Mammary epithelial cell (primary cell): ENCODE measurements at regions of chr5 and their contacts with region 1.

Region 1: GRCh38 chr5:73792687-73793320 is 166.8 kb downstream of the ARHGEF28 start:
- DNase-seq: peak; percentile 61
- H3K4me3 ChIP-seq: no peak overlapping the region
- H3K27ac ChIP-seq: no peak overlapping the region
- H3K4me1 ChIP-seq: peaks cover 35% of the 10 kb centered on the region
- H3K27me3 ChIP-seq: no peaks in the 10 kb centered on the region
- CTCF ChIP-seq: peak; percentile 97 to 99

Region 2: GRCh38 chr5:73693481-73694061 is 99.2 kb before region 1 on chr5:
- CTCF ChIA-PET with region 1: no interaction called
- dilution Hi-C with region 1: no loop called
- in situ Hi-C with region 1: no loop called
- intact Hi-C with region 1: loop called (anchors 5 kb)
- DNase-seq: no peak
- H3K4me3 ChIP-seq: no peak overlapping the region
- H3K27ac ChIP-seq: no peak overlapping the region
- H3K4me1 ChIP-seq: peaks cover 32% of the 10 kb centered on the region
- H3K27me3 ChIP-seq: no peaks in the 10 kb centered on the region
- CTCF ChIP-seq: peak; percentile 58 to 61

Region 3: GRCh38 chr5:73770172-73771025 is 22.4 kb before region 1 on chr5:
- CTCF ChIA-PET with region 1: no interaction called
- dilution Hi-C with region 1: no loop called
- in situ Hi-C with region 1: no loop called
- intact Hi-C with region 1: no loop called
- DNase-seq: no peak
- H3K4me3 ChIP-seq: no peak overlapping the region
- H3K27ac ChIP-seq: no peak overlapping the region
- H3K4me1 ChIP-seq: peaks cover 2% of the 10 kb centered on the region
- H3K27me3 ChIP-seq: no peaks in the 10 kb centered on the region
- CTCF ChIP-seq: no peak

Region 4: DNA sequence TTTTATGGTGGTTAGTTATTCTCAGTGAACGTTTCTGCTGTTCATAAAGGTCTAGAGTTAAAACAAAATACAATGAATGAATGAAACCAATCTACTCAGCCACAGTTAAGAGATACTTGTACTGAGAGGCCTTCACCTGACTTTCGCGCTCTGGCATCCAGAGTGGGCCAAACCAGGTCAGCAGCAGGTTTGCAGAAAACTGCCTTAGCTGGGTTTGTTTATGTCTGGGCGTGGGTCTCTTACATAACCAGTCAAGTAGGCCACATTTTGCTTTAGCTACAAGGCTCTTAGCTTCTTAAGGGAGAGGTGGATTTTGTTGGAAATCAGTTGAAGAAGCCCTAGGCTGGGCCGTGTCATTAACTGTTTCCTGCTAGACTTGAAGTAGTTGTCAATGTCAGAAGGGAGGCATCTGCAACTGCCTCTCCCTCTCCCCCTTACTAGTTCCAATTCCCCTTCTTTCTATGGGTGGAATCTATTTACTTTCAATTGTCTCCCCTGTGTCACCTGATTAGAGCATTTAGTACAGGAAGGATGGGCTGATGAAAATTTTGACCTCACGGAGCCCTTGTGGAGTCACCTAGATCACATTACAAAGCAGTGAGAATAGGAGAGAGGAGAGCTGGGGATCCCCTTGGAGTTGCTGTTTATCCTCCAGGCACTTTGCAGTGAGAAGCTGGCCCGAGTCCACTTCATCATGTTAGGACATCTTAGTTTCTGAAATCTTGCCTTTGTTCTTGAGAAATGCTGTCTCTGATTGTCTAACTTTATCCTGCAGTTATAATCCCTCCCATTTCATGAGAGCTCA is 33.7 kb after region 1 on chr5:
- CTCF ChIA-PET with region 1: no interaction called
- dilution Hi-C with region 1: no loop called
- in situ Hi-C with region 1: no loop called
- intact Hi-C with region 1: no loop called
- DNase-seq: peak; percentile 98
- H3K4me3 ChIP-seq: no peak overlapping the region
- H3K27ac ChIP-seq: peak overlapping the region; percentile 91
- H3K4me1 ChIP-seq: peaks cover 68% of the 10 kb centered on the region
- H3K27me3 ChIP-seq: no peaks in the 10 kb centered on the region
- CTCF ChIP-seq: no peak

Region 5: DNA sequence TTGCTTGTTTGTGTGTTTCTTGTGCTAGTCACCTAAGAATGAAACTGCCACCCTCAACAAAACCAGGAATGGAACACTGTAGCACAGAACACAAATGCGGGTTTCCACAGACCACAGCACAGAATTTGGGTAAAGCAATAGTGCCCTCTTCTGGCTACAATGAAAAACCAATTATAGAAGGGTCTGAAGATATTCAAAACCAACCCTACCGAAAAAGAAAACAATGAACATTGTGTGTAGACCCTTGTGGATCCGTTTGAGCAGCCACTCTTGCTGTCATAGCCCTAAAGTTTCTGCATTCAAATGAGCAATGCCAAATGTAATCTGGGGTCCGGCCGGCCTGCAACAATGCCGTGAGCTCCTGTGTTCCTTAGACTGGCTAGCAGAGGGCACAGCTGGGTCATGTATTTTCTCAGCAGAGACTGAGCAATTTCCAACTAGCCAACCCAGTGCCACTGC is 856.1 kb after region 1 on chr5:
- CTCF ChIA-PET with region 1: no interaction called
- dilution Hi-C with region 1: no loop called
- in situ Hi-C with region 1: no loop called
- intact Hi-C with region 1: loop called (anchors 5 kb)
- DNase-seq: no peak
- H3K4me3 ChIP-seq: no peak overlapping the region
- H3K27ac ChIP-seq: no peak overlapping the region
- H3K4me1 ChIP-seq: peaks cover 55% of the 10 kb centered on the region
- H3K27me3 ChIP-seq: no peaks in the 10 kb centered on the region
- CTCF ChIP-seq: peak; percentile 65 to 66